PC-3 (cell line): ENCODE measurements at regions of chr18 and their contacts with region 1.

Region 1: GRCh38 chr18:2258954-2259353 is 312.4 kb downstream of the METTL4 start:
- DNase-seq: peak; percentile 89
- ATAC-seq: peak; percentile 81
- H3K4me3 ChIP-seq: peak overlapping the region; percentile 22; the same call in 1 of the 2 replicates
- H3K27ac ChIP-seq: peak overlapping the region; percentile 13
- H3K4me1 ChIP-seq: peaks cover 37% of the 10 kb centered on the region
- H3K27me3 ChIP-seq: no peaks in the 10 kb centered on the region
- CTCF ChIP-seq: no peak

Region 2: GRCh38 chr18:2147476-2148230 is 111.3 kb before region 1 on chr18:
- CTCF ChIA-PET with region 1: no interaction called
- POLR2A ChIA-PET with region 1: no interaction called
- intact Hi-C with region 1: loop called (anchors 2 kb)
- DNase-seq: peak; percentile 85
- ATAC-seq: peak; percentile 76
- H3K4me3 ChIP-seq: peak overlapping the region; percentile 37; the same call in 1 of the 2 replicates
- H3K27ac ChIP-seq: peak overlapping the region; percentile 90
- H3K4me1 ChIP-seq: peaks cover 35% of the 10 kb centered on the region
- H3K27me3 ChIP-seq: no peaks in the 10 kb centered on the region
- CTCF ChIP-seq: no peak

Region 3: GRCh38 chr18:2180586-2180985 is 78.4 kb before region 1 on chr18:
- CTCF ChIA-PET with region 1: no interaction called
- POLR2A ChIA-PET with region 1: no interaction called
- intact Hi-C with region 1: loop called (anchors 5 kb)
- DNase-seq: no peak
- ATAC-seq: no peak
- H3K4me3 ChIP-seq: no peak overlapping the region
- H3K27ac ChIP-seq: no peak overlapping the region
- H3K4me1 ChIP-seq: no peaks in the 10 kb centered on the region
- H3K27me3 ChIP-seq: no peaks in the 10 kb centered on the region
- CTCF ChIP-seq: no peak

Region 4: DNA sequence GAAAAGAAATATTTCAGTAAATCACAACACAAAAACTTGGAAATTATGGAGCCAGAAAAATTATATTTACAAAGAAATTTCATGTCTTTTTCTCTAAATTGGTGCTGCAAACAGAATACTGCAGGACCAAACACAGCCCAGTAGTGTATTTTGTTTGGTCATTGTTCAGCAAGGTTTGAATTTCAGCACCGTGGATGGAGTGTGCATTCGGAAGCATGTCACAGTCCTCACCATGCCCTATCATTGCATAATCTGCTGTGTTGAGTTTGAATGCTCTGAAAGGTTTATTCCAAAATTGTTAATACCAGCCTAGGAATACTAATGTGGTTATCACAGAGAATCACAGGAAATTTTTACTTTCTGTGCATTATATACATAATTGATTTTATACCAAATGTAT is 15.7 kb after region 1 on chr18:
- CTCF ChIA-PET with region 1: no interaction called
- POLR2A ChIA-PET with region 1: no interaction called
- intact Hi-C with region 1: loop called (anchors 1 kb)
- DNase-seq: no peak
- ATAC-seq: no peak
- H3K4me3 ChIP-seq: no peak overlapping the region
- H3K27ac ChIP-seq: no peak overlapping the region
- H3K4me1 ChIP-seq: no peaks in the 10 kb centered on the region
- H3K27me3 ChIP-seq: no peaks in the 10 kb centered on the region
- CTCF ChIP-seq: no peak

Region 5: DNA sequence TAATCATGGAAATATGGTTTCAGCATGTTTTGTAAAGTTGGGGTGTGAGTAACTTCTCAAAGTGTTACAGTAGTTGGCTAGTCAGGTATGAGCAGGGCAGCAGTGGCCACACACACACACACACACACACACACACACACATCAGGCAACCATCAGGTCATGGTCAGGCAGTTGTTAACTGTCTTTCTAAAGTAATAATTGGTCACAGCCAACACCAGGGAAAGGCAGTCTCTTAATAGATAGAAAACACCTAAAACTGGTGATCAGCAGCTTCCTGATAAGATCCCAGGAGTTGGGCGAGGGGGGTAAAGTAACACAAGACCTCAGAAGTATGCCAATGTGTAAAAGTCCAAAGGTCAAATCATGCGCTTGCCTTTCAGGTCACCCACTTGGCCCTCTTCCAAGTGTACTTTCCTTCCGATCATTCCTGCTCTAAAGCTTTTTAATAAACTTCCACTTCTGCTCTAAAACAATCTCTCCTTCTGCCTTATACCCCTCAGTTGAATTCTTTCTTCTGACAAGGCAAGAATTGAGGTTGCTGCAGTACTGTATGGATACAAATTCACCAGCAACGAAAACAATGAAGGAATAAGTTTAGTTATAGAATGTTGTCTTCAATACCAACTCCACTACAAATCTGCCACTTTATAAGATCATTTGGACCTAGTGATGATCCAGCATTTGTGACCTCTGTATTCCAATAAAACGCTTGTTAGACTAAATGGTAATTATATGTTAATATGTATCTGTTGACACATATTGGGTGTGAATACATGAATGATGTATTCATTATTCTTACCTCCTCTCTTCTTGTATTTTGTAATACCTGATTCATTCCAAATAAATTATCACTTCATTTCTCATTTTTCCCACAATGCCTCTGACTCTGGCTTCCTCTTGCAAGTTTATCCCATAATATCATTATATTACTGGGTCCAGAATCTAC is 58.1 kb after region 1 on chr18:
- CTCF ChIA-PET with region 1: no interaction called
- POLR2A ChIA-PET with region 1: no interaction called
- intact Hi-C with region 1: no loop called
- DNase-seq: no peak
- ATAC-seq: no peak
- H3K4me3 ChIP-seq: no peak overlapping the region
- H3K27ac ChIP-seq: no peak overlapping the region
- H3K4me1 ChIP-seq: no peaks in the 10 kb centered on the region
- H3K27me3 ChIP-seq: no peaks in the 10 kb centered on the region
- CTCF ChIP-seq: no peak

Region 6: DNA sequence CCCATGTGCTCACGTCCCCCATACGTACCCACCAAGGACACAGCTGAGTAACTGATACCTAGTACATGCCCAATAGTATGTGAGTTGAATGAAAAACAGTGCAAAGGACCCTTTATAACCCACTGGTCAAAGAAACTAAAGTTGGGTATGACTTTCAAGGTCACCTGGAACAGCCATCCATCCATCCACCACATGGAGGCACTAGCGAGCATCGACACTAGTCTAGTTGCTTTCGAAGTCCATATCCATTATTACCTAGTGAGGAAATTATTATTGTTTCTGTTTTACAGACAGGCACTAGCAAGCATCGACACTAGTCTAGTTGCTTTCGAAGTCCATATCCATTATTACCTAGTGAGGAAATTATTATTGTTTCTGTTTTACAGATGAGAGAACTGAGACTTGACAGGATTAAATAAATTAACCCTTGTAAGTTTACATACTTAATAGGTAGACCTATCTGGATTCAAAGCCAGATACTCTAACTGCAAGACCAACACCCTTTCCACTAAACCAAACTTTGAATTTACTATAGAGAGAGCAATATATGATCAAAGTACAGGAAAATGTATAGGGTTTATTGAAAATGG is 78.7 kb after region 1 on chr18:
- CTCF ChIA-PET with region 1: no interaction called
- POLR2A ChIA-PET with region 1: no interaction called
- intact Hi-C with region 1: loop called (anchors 2 kb)
- DNase-seq: peak; percentile 79
- ATAC-seq: peak; percentile 67; the same call in 1 of the 2 replicates
- H3K4me3 ChIP-seq: no peak overlapping the region
- H3K27ac ChIP-seq: no peak overlapping the region
- H3K4me1 ChIP-seq: no peaks in the 10 kb centered on the region
- H3K27me3 ChIP-seq: no peaks in the 10 kb centered on the region
- CTCF ChIP-seq: peak; percentile 80

Region 7: DNA sequence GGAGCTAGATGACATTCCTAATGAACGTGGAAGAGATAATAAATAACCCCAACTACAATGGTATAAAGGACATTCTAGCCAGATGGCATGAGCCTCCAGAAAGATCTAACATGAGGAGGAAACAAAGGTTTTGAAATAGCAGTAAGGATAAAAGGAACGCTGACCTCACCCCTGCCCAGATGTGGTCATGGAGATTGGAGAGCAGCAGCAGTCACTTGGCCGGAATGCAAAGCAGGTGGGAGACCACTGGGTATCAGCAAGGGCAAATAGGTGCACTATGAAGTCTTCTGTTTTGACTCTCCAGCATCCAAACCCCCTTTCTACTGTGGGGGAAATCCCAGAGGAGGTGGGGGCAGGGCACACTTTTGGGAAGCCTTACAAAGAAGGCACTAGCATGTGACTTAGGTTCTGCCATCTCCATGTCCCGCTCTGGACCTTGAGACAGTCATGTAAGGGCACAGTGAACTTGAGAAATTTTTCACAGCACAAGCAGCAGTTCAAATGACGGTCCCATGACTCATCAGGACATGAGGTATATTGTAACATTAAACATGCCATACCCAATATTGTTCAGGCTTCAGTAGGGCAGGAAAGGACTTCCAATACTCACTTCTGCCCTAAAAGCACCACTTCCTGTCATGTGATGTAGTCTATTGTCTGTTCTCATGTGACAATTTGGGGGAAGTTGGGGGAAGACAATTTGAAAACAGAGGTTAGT is 257.1 kb after region 1 on chr18:
- CTCF ChIA-PET with region 1: no interaction called
- POLR2A ChIA-PET with region 1: no interaction called
- intact Hi-C with region 1: loop called (anchors 5 kb)
- DNase-seq: peak; percentile 98
- ATAC-seq: peak; percentile 92
- H3K4me3 ChIP-seq: peak overlapping the region; percentile 20
- H3K27ac ChIP-seq: peak overlapping the region; percentile 95
- H3K4me1 ChIP-seq: peaks cover 36% of the 10 kb centered on the region
- H3K27me3 ChIP-seq: no peaks in the 10 kb centered on the region
- CTCF ChIP-seq: no peak

Region 8: GRCh38 chr18:2881088-2881839 is 622.3 kb after region 1 on chr18:
- CTCF ChIA-PET with region 1: no interaction called
- POLR2A ChIA-PET with region 1: no interaction called
- intact Hi-C with region 1: no loop called
- DNase-seq: no peak
- ATAC-seq: no peak
- H3K4me3 ChIP-seq: no peak overlapping the region
- H3K27ac ChIP-seq: no peak overlapping the region
- H3K4me1 ChIP-seq: no peaks in the 10 kb centered on the region
- H3K27me3 ChIP-seq: peaks cover 39% of the 10 kb centered on the region
- CTCF ChIP-seq: no peak